Posterior vena cava (tissue), 2 donors: ENCODE measurements at regions of chrX and their contacts with region 1.

Region 1: DNA sequence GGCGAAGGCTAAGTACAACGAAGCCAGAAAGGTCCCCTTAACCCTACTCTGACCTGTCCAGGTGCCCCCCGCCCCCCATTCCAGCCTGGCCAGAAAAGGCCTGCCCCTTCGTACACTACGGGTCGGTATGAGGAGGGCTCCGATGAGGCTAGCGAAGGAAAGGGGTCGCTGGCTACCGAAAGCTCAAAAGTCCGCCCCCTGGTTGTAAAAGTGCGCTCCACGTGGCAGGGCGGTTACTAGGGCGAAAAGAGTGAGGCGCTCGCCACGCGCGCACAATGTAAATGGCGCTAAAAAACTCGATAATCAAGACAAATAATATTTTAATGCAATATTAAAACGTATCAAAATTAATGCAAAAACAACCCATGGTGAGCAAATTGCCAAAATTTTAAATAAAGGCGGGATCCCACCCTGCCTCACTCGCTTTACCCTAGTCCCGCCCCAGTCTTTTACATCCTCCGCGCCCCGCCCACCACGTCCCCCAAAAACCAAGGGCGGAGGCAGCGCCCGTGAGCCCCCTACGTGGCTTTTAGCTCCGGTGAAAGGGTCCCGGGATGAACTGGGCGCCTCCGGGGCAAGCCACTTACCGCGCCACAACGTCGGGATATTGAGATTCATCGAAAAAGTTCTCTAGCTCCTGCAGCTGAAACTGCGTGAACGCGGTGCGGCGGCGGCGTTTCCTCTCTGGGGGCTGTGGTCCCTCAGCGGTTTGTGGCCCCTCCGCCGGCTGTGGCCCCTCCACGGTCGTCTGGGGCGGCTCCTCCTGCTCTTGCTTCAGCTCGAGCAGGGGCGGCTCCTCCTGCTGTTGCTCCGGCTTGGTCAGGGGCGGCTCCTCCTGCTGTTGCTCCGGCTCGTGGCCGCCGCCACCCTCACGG is 929 bp downstream of the ESX1 start:
- DNase-seq: no peak

Region 2: DNA sequence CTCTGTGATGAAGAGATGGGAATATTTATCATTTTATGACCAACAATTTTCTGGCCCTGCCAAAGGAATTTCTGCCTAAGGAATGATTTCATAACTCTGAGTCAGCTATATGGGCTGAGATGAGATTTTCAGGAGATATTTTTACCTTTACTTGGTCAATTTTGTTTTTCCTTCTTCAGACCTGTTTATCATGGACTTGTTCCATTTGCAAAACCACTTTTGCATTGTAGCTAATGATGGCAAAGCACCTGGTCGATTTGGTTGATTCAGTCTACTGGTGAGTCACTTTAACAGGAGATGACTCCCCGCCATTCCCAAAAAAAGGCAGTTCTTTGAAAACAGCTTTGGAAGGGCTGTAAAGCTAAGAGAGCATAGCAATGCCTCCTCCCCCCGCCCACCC is 913.4 kb after region 1 on chrX:
- intact Hi-C with region 1: loop called in 1 of 2 experiments (anchors 5 kb)
- DNase-seq: no peak